ENCODE measurements at regions of chr1 and their contacts with region 1.

Region 1: DNA sequence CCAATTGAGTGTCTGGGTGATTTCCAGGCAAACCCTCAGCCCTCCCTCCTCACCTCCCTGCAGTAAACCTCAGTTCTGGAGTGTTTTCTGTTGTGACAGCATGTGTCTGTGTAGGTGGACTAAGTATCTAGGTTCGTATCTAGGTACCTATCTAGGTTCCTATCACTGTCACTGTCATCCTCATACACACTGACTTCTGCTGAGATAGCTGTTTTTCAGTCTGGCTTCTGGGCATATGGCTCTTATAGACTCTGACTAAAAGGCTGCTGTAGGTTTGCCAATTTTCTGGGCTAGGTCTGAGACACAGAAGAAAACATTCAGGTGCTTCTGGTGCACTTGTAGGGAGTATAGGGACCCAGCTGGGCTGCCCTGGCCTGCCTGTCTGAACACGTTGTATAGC is 8.1 kb upstream of the TRIM67 start:
- DNase-seq: no peak
- H3K4me3 ChIP-seq: no peak overlapping the region
- H3K27ac ChIP-seq: no peak overlapping the region
- H3K4me1 ChIP-seq: no peaks in the 10 kb centered on the region
- H3K27me3 ChIP-seq: peaks cover 3 to 14% of the 10 kb centered on the region in 2 experiments
- CTCF ChIP-seq: no peak
- POLR2A ChIP-seq: no peak

Region 2: DNA sequence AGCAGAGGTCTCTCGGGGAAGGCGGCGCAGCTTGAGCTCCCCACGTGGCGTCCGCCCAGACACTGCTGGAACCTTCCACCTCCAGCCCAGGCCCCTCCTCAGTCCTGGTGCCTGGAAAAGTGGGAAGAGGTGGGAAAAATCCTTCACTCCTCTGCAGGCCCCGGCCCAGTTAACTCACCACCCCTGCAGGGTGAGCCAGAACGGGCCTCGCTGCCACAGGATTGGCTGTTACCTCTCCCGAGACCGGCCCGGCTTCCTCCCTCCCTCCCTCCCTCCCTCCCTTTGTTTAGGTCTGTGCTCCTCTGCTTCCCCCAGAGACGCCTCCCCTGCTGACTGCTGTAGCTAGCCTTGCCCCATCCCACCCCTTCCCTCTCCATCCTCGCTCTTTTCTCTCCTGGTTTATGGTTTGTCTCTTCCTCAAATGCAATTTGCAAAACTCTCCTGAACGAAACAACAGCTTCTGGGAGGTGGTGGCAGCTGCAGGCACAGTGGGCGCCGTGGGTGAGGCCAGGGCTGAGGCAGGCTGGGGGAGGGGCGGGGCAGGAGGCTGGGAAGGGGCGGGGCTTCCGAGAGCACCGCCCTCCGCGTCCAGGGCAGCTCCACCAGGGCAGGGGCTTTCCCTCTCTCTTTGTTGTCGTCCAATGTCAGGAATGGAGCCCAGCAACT is 400.0 kb before region 1 on chr1:
- CTCF ChIA-PET with region 1: no interaction called
- POLR2A ChIA-PET with region 1: no interaction called
- dilution Hi-C with region 1: no loop called
- intact Hi-C with region 1: no loop called
- DNase-seq: peak; percentile 41
- H3K4me3 ChIP-seq: peak overlapping the region in 1 of 3 experiments; percentile 7
- H3K27ac ChIP-seq: no peak overlapping the region
- H3K4me1 ChIP-seq: no peaks in the 10 kb centered on the region
- H3K27me3 ChIP-seq: no peaks in the 10 kb centered on the region
- CTCF ChIP-seq: no peak
- POLR2A ChIP-seq: no peak

Region 3: DNA sequence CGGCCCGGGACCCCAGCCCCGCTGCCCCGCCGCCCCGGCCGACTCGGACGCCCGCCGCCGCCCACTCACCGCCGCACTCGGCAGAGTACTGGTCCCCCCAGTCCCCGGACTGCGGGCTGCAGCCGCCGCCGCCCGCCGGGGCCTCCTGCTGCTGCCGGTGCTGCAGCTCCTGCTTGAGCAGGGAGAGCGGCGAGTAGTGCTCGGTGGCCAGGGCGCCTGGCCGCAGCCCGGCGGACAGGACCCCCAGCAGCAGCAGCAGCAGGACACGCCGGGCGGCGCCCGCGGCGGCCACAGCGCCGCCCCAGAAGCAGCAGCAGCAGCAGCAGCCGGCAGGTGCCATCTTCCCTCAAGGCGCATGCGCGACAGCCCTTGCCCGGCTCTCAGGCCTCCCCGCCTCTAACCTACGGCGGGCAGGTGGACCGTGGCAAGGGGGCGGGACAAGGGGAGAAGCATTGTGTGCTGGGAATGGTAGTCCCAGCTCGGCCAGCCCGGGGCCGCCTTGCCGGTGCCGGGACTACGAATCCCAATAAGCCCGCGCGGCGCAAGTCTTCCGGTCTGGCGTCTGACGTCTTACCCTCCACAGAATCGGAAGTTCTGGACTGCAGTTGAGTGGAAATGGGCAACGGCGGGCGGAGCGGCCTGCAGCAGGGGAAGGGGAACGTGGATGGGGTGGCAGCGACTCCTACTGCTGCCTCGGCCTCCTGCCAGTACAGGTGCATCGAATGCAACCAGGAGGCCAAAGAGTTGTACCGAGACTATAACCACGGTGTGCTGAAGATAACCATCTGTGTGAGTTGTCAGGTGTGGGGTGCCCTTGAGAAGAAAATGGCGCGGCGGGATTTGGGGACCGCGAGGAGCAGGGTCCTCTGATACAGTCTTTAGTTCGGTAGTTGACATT is 175.0 kb before region 1 on chr1 and contains the starts of genes ARV1 and TTC13:
- CTCF ChIA-PET with region 1: no interaction called
- POLR2A ChIA-PET with region 1: no interaction called
- dilution Hi-C with region 1: no loop called
- intact Hi-C with region 1: no loop called
- DNase-seq: peak; percentile 99
- H3K4me3 ChIP-seq: peak within 1 kb of the TSS; percentile 72 to 96 (median 86)
- H3K27ac ChIP-seq: peak within 1 kb of the TSS; percentile 42
- H3K4me1 ChIP-seq: peaks cover 19% of the 10 kb centered on the region
- H3K27me3 ChIP-seq: no peaks in the 10 kb centered on the region
- CTCF ChIP-seq: peak; percentile 5 to 29
- POLR2A ChIP-seq: peak; percentile 88
- total RNA-seq, gene ARV1: 10.7 and 12.5 TPM in 2 replicates
- total RNA-seq, gene TTC13: 22.2 and 23.9 TPM in 2 replicates

Region 4: DNA sequence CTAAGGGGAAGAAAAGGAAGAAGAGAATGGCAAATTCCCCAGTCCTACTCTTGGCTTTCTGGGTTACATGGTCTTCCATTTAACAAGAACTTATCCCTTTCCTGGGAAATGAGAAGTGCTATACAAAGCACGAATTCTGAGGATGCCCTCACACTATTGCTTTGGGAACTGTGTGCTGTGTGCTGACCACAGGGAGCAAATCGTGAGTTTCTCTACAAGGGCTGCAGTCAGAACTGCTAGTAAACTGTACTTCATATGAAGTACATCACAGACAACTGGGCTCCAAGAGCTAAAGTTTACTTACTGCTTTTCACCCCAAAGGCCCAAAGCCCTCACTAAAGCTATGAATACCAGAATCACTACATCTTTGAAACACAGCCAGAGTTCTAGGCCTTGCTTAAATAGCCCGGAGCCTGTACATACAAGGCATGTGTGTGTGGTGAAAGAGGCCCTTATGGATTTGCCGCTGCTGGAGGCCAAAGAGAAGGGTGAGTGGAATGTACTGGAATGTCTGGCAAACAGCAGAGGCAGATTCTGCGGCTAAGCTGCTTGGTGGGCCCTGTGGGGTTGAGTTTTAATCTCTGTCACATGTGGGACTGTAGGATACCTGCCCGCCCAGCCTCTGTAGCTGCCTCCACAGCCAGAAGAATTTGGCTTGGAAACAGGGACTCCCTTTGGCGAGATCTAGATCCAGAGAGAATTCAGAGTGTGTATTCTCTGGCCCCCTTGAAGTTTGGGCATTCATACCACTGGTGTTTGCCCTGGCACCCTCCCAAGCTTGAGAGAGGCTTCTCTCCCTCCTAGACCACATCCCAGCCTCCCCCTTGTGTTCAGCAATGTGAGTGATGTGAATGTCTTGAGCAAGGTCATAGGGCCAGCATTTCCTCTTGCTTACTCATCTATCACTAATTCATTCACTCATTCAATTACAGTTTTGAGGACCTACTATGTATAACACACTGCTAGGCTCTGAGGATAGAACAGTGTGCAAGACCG is 13.8 kb before region 1 on chr1:
- CTCF ChIA-PET with region 1: no interaction called
- POLR2A ChIA-PET with region 1: no interaction called
- dilution Hi-C with region 1: no loop called
- intact Hi-C with region 1: no loop called
- DNase-seq: no peak
- H3K4me3 ChIP-seq: no peak overlapping the region
- H3K27ac ChIP-seq: peak overlapping the region; percentile 38
- H3K4me1 ChIP-seq: peaks cover 19% of the 10 kb centered on the region
- H3K27me3 ChIP-seq: peaks cover 0 to 5% of the 10 kb centered on the region in 2 experiments
- CTCF ChIP-seq: no peak
- POLR2A ChIP-seq: no peak

Region 5: DNA sequence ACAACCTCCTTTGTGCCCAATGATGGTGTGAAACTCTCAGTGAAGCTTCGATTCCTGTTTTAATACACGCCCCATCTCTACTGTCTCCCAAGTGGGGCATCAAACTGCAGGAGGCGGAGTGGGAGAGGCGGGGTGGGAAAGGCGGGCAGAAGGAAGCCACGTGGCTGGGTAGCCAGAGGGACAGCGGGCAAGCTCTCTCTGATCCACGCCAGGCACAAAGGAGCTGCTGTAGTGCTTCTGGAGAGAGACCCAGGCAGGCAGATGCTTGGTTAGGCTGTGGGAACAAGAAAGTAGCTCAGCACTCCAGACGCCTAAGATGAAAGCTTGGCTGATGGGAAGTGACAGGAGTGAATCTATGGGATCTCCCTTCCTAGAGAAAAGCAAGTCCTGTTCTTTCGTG is 33.8 kb after region 1 on chr1:
- CTCF ChIA-PET with region 1: no interaction called
- POLR2A ChIA-PET with region 1: no interaction called
- dilution Hi-C with region 1: loop called (anchors 5 kb)
- intact Hi-C with region 1: no loop called
- DNase-seq: no peak
- H3K4me3 ChIP-seq: no peak overlapping the region
- H3K27ac ChIP-seq: no peak overlapping the region
- H3K4me1 ChIP-seq: no peaks in the 10 kb centered on the region
- H3K27me3 ChIP-seq: peaks cover 0 to 2% of the 10 kb centered on the region in 2 experiments
- CTCF ChIP-seq: no peak
- POLR2A ChIP-seq: no peak

Measured in endothelial cell of umbilical vein (primary cell).